Caco-2 (cell line): ENCODE measurements at regions of chr12 and their contacts with region 1.

Region 1: GRCh38 chr12:2890388-2891239 is at the start of gene TULP3:
- DNase-seq: peak; percentile 100
- H3K4me3 ChIP-seq: peak within 1 kb of the TSS; percentile 91
- H3K4me3 Mint-ChIP-seq: peak within 1 kb of the TSS; percentile 82
- H3K27ac Mint-ChIP-seq: peak within 1 kb of the TSS; percentile 91
- H3K4me1 ChIP-seq: peaks cover 18% of the 10 kb centered on the region
- H3K4me1 Mint-ChIP-seq: peaks cover 15% of the 10 kb centered on the region
- H3K27me3 ChIP-seq: no peaks in the 10 kb centered on the region
- H3K27me3 Mint-ChIP-seq: no peaks in the 10 kb centered on the region
- CTCF ChIP-seq: peak in 1 of 2 experiments; percentile 18
- total RNA-seq, gene TULP3: 31.0 and 31.7 TPM in 2 replicates

Region 2: GRCh38 chr12:2877047-2877952 is 13.3 kb before region 1 on chr12 and contains the starts of genes FOXM1 and RHNO1:
- CTCF ChIA-PET with region 1: interaction called, 19 read pairs
- POLR2A ChIA-PET with region 1: interaction called, 22 read pairs
- intact Hi-C with region 1: loop called (anchors 1 kb)
- DNase-seq: peak; percentile 94 to 97
- H3K4me3 ChIP-seq: peak within 1 kb of the TSS; percentile 96
- H3K4me3 Mint-ChIP-seq: peak within 1 kb of the TSS; percentile 75
- H3K27ac Mint-ChIP-seq: peak within 1 kb of the TSS; percentile 99
- H3K4me1 ChIP-seq: peaks cover 28% of the 10 kb centered on the region
- H3K4me1 Mint-ChIP-seq: peaks cover 31% of the 10 kb centered on the region
- H3K27me3 ChIP-seq: no peaks in the 10 kb centered on the region
- H3K27me3 Mint-ChIP-seq: no peaks in the 10 kb centered on the region
- CTCF ChIP-seq: peak in 1 of 2 experiments; percentile 28
- total RNA-seq, gene FOXM1: 217 and 222 TPM in 2 replicates
- total RNA-seq, gene RHNO1: 99.1 and 99.8 TPM in 2 replicates

Region 3: GRCh38 chr12:2912216-2912575 is 21.6 kb after region 1 on chr12:
- CTCF ChIA-PET with region 1: interaction called, 14 read pairs
- POLR2A ChIA-PET with region 1: no interaction called
- intact Hi-C with region 1: no loop called
- DNase-seq: no peak
- H3K4me3 ChIP-seq: no peak overlapping the region
- H3K4me3 Mint-ChIP-seq: no peak overlapping the region
- H3K27ac Mint-ChIP-seq: no peak overlapping the region
- H3K4me1 ChIP-seq: no peaks in the 10 kb centered on the region
- H3K4me1 Mint-ChIP-seq: peaks cover 7% of the 10 kb centered on the region
- H3K27me3 ChIP-seq: no peaks in the 10 kb centered on the region
- H3K27me3 Mint-ChIP-seq: no peaks in the 10 kb centered on the region
- CTCF ChIP-seq: no peak

Region 4: DNA sequence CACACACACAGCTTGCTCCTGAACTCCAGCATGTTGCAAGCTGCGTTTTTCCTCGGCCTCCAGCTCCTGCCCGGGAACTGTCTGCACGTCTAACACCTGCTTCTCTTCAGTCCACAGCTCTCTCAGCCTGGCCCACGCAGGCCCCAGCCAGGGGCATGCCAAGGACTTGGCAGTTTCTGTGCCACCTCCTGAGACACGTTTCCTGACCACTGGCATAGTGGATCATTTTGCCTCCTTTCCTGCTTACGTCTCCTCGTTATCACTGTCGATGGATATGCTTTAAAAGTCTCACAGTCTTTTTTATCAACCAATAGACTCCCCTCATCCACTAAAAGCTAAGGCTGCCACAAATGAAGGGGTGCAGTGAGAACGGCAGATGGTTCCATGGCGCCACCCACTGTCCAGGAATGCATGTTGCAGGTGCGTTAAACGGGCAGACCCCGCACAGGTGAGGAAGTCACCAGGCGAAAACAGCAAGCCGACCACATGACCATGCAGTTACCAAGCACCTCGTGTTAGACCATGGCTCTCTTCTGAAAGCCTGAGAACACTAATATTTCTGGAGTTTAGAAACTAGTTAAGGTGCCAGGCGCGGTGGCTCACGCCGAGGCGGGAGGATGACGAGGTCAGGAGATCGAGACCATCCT is 53.9 kb after region 1 on chr12:
- CTCF ChIA-PET with region 1: interaction called, 25 read pairs
- POLR2A ChIA-PET with region 1: interaction called, 5 read pairs
- intact Hi-C with region 1: loop called (anchors 1 kb)
- DNase-seq: peak; percentile 83 to 86
- H3K4me3 ChIP-seq: no peak overlapping the region
- H3K4me3 Mint-ChIP-seq: peak overlapping the region; percentile 59
- H3K27ac Mint-ChIP-seq: no peak overlapping the region
- H3K4me1 ChIP-seq: no peaks in the 10 kb centered on the region
- H3K4me1 Mint-ChIP-seq: no peaks in the 10 kb centered on the region
- H3K27me3 ChIP-seq: no peaks in the 10 kb centered on the region
- H3K27me3 Mint-ChIP-seq: no peaks in the 10 kb centered on the region
- CTCF ChIP-seq: peak; percentile 91 to 95